ENCODE measurements at regions of chr17 and their contacts with region 1.

Region 1: GRCh38 chr17:40559954-40560591 is 5.2 kb downstream of the CCR7 start:
- DNase-seq: peak; percentile 97 to 99
- ATAC-seq: peak; percentile 84 to 90
- H3K4me3 ChIP-seq: no peak overlapping the region
- H3K27ac ChIP-seq: peak overlapping the region; percentile 95 to 99
- H3K4me1 ChIP-seq: peaks cover 60% of the 10 kb centered on the region
- CTCF ChIP-seq: peak; percentile 99
- EP300 ChIP-seq: peak in 1 of 2 experiments; percentile 22; a peak in 1 of 5 replicates
- POLR2A ChIP-seq: no peak
- RAD21 ChIP-seq: peak; percentile 100

Region 2: GRCh38 chr17:40362696-40363110 is 197.4 kb before region 1 on chr17:
- CTCF ChIA-PET with region 1: interaction called, 157 read pairs
- POLR2A ChIA-PET with region 1: interaction called, 6 read pairs
- DNase-seq: peak; percentile 93 to 97
- ATAC-seq: peak; percentile 83 to 86
- H3K4me3 ChIP-seq: peak overlapping the region; percentile 61
- H3K27ac ChIP-seq: peak overlapping the region; percentile 84 to 95
- H3K4me1 ChIP-seq: peaks cover 30% of the 10 kb centered on the region
- CTCF ChIP-seq: peak; percentile 85
- EP300 ChIP-seq: no peak
- POLR2A ChIP-seq: peak; percentile 74
- RAD21 ChIP-seq: peak; percentile 73 to 85

Region 3: DNA sequence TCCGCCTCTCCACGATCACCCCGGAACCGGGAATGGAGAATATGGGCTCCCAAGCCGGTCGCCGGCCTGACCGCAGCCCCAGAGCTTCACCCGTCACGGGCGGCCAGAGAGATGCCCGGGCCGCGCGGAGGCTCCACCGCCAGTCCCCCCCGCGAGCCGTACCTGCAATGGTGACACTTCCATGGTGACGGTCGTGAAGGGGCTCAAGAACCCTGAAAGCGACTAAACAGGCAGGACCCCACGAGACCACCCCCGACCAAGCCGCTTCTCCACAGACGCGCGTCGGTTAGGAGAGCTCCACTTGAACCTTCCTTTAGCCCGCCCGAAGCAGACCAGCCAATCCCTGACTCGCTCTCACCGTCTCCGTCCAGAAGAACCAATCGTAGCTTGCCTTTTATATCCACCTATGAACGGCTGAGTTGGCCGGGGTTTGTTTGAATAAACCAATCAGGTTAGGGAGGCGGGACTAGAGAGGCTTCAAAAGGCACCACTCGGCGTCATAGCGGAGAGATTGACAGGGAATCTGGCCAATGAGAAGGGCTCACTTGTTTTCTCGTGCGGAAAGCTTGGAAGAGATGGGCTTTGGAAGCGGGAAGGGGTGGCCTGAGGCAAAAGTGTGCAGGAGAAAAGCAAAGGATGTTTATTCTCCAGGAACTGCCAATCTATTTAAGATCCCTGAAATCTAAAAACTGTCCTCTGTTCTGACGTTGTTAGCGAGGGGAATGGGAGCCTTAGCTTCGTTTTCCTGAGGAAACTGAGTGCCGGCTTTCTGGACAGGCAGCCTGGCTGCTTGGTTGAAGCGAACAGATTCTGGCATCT is 142.3 kb before region 1 on chr17 and contains the start of gene TOP2A:
- CTCF ChIA-PET with region 1: interaction called, 50 read pairs
- POLR2A ChIA-PET with region 1: interaction called, 3 read pairs
- DNase-seq: peak; percentile 100
- ATAC-seq: peak; percentile 95 to 96
- H3K4me3 ChIP-seq: peak within 1 kb of the TSS; percentile 68
- H3K27ac ChIP-seq: peak within 1 kb of the TSS; percentile 79 to 92
- H3K4me1 ChIP-seq: peaks cover 39% of the 10 kb centered on the region
- CTCF ChIP-seq: no peak
- EP300 ChIP-seq: no peak
- POLR2A ChIP-seq: peak; percentile 62
- RAD21 ChIP-seq: no peak
- polyA plus RNA-seq, gene TOP2A: 273 and 416 TPM in 2 replicates

Region 4: GRCh38 chr17:40450175-40450574 is 109.9 kb before region 1 on chr17:
- CTCF ChIA-PET with region 1: interaction called, 169 read pairs
- POLR2A ChIA-PET with region 1: interaction called, 3 read pairs
- DNase-seq: peak; percentile 81 to 87
- ATAC-seq: peak; percentile 18 to 22; a peak in 3 of 6 replicates
- H3K4me3 ChIP-seq: peak overlapping the region; percentile 78
- H3K27ac ChIP-seq: peak overlapping the region; percentile 98
- H3K4me1 ChIP-seq: peaks cover 82% of the 10 kb centered on the region
- CTCF ChIP-seq: peak; percentile 76
- EP300 ChIP-seq: no peak
- POLR2A ChIP-seq: no peak
- RAD21 ChIP-seq: peak; percentile 47 to 54; a peak in 3 of 5 replicates

Region 5: DNA sequence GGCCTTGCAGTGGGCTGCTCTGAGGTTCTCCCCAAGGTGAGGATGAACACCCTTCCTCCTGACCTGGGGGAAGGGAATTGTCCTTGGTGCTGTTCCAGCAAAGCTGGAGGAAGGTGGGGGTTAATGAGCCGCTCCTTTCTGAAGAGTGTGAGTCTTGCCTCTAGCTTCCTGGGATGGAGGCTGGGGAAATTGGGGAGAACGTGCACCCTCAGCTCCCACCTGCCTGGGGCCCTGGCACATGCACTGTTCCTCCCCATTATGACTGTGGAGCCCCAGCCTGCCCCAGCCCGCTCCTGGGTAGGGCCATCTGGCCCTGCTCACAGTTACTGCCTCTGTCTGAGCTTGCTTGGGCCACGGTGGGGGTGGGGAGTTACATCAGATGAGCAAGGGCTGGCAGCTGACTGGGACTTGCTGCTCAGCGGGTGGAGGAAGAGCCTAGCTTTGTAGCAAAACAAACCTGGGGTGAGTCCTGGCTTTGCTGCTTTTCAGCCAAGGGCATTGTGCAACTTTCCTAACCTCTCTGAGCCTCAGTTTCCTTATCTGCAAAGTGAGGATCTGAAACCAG is 69.7 kb before region 1 on chr17:
- CTCF ChIA-PET with region 1: interaction called, 203 read pairs
- POLR2A ChIA-PET with region 1: interaction called, 18 read pairs
- DNase-seq: peak in 1 of 2 experiments; percentile 76
- ATAC-seq: peak in 1 of 2 experiments; percentile 1; a peak in 2 of 6 replicates
- H3K4me3 ChIP-seq: no peak overlapping the region
- H3K27ac ChIP-seq: peak overlapping the region; percentile 96 to 97
- H3K4me1 ChIP-seq: peaks cover 98% of the 10 kb centered on the region
- CTCF ChIP-seq: no peak
- EP300 ChIP-seq: 0 out of 5 replicates have a peak, but pooled peaks have one; percentile 1 to 15
- POLR2A ChIP-seq: no peak
- RAD21 ChIP-seq: no peak

Region 6: GRCh38 chr17:40531051-40531991 is 28.8 kb before region 1 on chr17:
- CTCF ChIA-PET with region 1: interaction called, 1,144 read pairs
- POLR2A ChIA-PET with region 1: interaction called, 18 read pairs
- DNase-seq: no peak
- ATAC-seq: no peak
- H3K4me3 ChIP-seq: no peak overlapping the region
- H3K27ac ChIP-seq: peak overlapping the region; percentile 95 to 99
- H3K4me1 ChIP-seq: peaks cover 57% of the 10 kb centered on the region
- CTCF ChIP-seq: no peak
- EP300 ChIP-seq: no peak
- POLR2A ChIP-seq: no peak
- RAD21 ChIP-seq: no peak

Region 7: DNA sequence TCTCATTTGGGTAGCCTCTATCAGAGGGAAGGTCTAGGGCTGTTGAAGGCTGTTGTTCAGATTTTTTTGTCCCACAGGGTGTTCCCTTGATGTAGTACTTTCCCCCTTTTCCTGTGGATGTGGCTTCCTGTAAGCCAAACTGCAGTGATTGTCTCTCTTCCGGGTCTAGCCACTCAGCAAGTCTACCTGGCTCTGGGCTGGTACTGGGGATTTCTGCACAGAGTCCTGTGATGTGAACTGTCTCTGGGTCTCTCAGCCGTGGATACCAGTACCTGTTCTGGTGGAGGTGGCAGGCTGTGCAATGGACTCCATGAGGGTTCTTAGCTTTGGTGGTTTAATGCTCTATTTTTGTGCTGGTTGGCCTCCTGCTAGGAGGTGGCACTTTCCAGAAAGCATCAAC is 28.5 kb after region 1 on chr17:
- CTCF ChIA-PET with region 1: interaction called, 25 read pairs
- POLR2A ChIA-PET with region 1: no interaction called
- DNase-seq: no peak
- ATAC-seq: no peak
- H3K4me3 ChIP-seq: no peak overlapping the region
- H3K27ac ChIP-seq: no peak overlapping the region
- H3K4me1 ChIP-seq: no peaks in the 10 kb centered on the region
- CTCF ChIP-seq: no peak
- EP300 ChIP-seq: no peak
- POLR2A ChIP-seq: no peak
- RAD21 ChIP-seq: no peak